Transverse colon (tissue), 4 donors: ENCODE measurements at regions of chr17 and their contacts with region 1.

Region 1: DNA sequence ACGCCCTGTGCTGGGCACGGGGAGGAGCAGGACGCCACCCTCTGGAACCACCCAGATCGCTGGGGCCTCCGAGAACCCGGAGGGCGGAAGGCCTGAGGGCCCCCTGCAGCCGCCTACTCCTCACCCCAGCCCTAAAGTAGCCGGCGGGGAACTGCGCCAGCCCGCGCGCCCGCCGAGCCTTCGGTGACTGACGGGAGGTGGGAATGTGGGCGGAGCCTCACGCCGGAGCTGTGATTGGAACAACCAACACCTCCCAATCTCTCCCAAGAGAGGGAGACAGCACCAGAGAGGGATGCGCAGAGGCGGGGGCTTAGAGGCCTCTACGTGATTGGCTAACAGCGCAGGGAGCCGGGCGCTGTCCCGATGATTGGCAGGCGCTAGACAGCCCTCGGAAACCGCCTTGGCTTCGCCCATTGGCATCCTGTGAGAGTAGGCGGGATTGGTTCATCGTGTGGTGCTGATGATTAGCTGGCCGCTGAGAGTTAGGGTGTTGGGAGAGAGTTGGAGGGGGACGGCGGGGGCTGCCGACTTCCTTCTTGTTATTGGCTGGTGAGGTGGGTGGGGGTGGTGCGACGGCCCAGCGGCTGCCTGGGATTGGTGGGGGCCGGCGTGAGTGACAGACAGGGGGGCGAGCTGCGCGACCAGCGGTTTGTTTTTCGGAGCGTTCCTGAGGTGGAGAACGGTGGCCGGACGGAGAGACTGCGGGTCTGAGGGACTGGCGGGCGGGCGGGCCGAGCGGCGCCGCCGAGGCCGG is at the start of gene MAP3K3:
- DNase-seq: peak; percentile 99
- H3K4me3 ChIP-seq: peak within 1 kb of the TSS; percentile 73 to 83 (median 82)
- H3K27ac ChIP-seq: peak within 1 kb of the TSS; percentile 84 to 93 (median 90)
- H3K4me1 ChIP-seq: peaks cover 11 to 34% (median 25%) of the 10 kb centered on the region in 4 donors
- H3K27me3 ChIP-seq: no peaks in the 10 kb centered on the region
- CTCF ChIP-seq: peak in 1 of 5 experiments; percentile 19
- EP300 ChIP-seq: no peak
- POLR2A ChIP-seq: peak; percentile 68
- total RNA-seq, gene MAP3K3: 15.7 to 32.1 (median 24.7) TPM

Region 2: DNA sequence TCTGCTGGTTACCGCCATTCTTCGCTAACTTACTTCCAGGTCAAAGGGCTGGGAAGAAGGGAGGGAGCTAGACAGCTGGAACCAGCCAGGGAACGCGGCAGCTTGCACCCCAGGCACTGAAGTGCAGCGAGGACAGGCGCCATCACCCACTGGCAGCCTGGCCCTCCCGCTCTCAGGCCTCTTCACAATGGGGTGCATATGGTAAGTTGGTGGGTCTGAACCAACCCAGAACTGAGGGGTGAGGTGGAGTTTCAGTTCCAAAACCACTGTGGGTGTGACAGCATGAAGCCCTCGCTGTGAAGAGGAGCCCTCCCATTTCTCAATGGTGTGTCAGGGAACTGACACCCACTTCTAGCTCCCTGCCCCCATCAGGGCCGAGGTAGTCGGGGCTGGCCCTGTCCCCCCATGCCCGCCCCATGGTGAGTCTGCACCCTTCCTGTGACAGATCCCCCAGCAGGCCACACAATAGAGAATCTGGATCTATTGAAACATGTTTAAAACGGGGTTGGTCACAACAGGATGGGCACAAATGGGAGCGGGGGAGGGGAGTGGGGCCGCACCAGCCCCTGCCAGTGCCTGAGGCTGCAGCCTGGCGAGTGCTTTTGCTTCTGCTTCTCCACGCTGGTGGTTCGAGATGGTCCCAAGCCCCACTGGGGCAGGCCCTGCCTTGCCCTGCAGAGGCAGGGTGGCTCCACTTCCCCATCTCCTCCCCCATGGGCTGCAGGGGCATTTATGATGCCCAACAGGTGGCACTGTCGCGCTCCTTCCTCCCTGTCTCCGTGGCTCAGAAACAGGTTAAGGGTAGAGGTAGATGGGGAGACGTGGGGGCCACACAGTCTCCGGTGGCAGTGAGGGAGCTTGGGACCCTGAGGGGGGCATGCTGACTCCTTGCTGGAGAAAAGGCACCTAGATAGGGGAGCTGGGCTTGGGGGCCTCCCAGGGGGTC is 75.7 kb after region 1 on chr17:
- in situ Hi-C with region 1: no loop called
- intact Hi-C with region 1: loop called (anchors 10 kb)
- DNase-seq: peak; percentile 83
- H3K4me3 ChIP-seq: peak overlapping the region in 1 of 4 donors; percentile 64
- H3K27ac ChIP-seq: peak overlapping the region; percentile 83 to 87 (median 84)
- H3K4me1 ChIP-seq: peaks cover 7 to 41% (median 29%) of the 10 kb centered on the region in 4 donors
- H3K27me3 ChIP-seq: peaks cover 15% of the 10 kb centered on the region
- CTCF ChIP-seq: peak; percentile 47 to 70 (median 61)
- EP300 ChIP-seq: no peak
- POLR2A ChIP-seq: peak; percentile 20

Region 3: GRCh38 chr17:63722403-63722802 is 100.5 kb after region 1 on chr17:
- in situ Hi-C with region 1: no loop called
- intact Hi-C with region 1: no loop called
- DNase-seq: no peak
- H3K4me3 ChIP-seq: no peak overlapping the region
- H3K27ac ChIP-seq: no peak overlapping the region
- H3K4me1 ChIP-seq: no peaks in the 10 kb centered on the region
- H3K27me3 ChIP-seq: no peaks in the 10 kb centered on the region
- CTCF ChIP-seq: no peak
- EP300 ChIP-seq: no peak
- POLR2A ChIP-seq: no peak